ENCODE measurements at regions of chr17 and their contacts with region 1.

Region 1: DNA sequence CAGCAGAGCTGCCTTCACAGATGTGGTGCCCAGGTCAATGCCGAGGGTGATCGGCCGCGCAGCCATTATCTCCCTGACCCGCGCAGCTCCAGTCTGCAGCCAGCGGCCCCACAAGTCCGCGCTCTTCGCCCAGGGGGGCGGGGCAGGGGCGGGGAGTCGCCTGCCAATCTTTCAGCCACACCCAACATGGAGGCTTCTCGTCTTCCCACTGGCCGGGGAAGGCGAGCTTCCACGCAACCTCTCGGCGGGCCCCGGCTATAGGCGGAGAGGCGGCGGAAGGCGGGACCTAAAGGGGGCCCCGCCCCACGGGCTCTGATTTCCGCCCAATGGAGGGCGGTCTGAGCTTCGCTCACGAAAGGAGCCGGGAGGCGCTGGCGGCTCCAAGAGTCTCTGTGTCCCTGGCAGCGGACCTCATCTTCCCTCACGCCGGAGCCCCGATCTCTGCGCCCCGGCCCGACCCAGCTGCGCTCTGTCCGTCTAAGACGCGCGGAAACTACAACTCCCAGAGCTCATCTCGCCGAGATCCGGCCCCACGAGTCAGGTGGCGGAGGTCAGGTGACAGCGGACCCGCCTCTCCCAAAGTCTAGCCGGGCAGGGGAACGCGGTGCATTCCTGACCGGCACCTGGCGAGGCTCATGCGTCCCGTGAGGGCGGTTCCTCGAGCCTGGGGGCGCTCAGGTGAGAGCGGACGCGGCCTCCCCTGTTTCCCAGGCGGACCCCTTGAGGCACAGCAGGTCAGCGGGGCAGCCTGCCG is at the starts of genes CTNS and SHPK:
- DNase-seq: peak; percentile 95
- H3K4me3 Mint-ChIP-seq: peak within 1 kb of the TSS; percentile 98
- H3K27ac Mint-ChIP-seq: peak within 1 kb of the TSS; percentile 99
- H3K4me1 Mint-ChIP-seq: peaks cover 44% of the 10 kb centered on the region
- H3K27me3 Mint-ChIP-seq: no peaks in the 10 kb centered on the region
- total RNA-seq, gene CTNS: 46.6 and 47.9 TPM in 2 replicates
- total RNA-seq, gene SHPK: 19.5 and 19.7 TPM in 2 replicates

Region 2: DNA sequence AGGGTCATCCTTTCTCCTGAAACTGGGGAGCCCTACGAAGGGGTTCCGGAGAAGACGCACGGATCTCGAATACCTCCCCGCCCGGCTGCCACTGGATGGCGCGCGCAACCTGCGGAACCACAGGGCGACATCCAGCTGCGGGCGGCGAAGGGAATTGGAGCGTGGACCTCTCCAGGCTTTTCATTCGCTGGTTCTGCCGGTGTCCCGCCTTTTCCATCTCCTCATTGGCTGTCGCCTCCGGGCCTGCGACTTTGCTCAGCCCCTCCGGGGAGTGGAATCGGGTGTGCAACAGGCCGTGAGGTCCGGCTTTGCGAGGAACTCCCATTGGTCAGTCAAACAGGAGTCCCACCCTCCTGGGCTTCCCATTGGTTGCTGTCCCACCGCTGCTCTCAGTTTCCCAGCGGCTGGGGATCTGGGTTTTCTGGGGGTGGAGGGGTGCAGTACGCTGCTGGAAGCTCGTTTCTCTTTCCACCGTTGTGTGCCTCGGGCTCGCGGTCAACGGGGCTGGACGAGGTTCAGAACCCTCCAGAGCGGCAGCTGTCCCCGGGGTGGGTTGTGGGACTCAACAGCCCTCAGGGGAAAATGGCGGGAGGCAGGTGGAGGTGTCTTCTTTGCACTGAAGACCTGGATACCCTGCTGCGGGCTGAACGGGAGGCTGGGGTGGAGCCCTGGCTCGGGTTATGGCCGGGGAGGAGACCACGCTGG is 587.4 kb before region 1 on chr17:
- intact Hi-C with region 1: loop called (anchors 5 kb)
- DNase-seq: peak; percentile 89
- H3K4me3 Mint-ChIP-seq: peak overlapping the region; percentile 92
- H3K27ac Mint-ChIP-seq: peak overlapping the region; percentile 84
- H3K4me1 Mint-ChIP-seq: peaks cover 6% of the 10 kb centered on the region
- H3K27me3 Mint-ChIP-seq: no peaks in the 10 kb centered on the region

Region 3: DNA sequence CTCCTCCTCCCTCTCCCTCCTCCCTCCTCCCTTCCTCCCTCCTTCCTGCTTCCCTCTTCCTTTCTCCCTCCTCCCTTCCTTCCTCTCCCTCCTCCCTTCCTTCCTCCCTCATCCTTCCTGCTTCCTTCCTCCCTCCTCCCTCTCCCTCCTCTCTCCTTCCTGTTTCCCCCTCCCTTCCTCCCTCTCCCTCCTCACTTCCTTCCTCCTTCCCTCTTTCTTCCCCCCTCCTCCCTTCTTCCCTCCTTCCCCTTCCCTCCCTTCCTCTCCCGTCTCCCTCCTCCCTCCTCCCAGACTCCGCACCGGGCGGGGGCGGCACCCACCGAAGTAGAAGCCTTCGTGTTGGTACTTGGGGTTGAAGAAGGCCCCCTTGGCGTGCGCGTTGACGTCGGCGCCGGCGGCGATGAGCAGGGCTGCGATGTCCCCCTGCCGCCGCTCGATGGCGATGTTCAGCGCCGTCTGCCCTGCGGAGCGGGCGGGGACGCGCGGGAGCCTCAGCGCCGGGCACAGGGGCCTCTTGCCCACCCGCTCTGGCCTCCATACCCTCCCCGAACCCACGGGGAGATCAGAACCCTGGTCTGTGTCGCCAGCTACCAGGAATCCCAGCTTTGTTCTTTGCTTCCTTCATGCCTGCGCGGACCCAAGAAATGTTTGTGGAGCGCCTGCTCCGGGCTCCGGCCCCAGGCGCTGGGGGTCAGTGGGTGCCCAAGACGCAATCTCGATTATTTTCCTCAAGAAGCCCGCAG is 100.9 kb before region 1 on chr17:
- intact Hi-C with region 1: loop called (anchors 5 kb)
- DNase-seq: peak; percentile 40
- H3K4me3 Mint-ChIP-seq: peak overlapping the region; percentile 26
- H3K27ac Mint-ChIP-seq: no peak overlapping the region
- H3K4me1 Mint-ChIP-seq: peaks cover 8% of the 10 kb centered on the region
- H3K27me3 Mint-ChIP-seq: peaks cover 4% of the 10 kb centered on the region